ENCODE measurements at regions of chr14 and their contacts with region 1.

Region 1: DNA sequence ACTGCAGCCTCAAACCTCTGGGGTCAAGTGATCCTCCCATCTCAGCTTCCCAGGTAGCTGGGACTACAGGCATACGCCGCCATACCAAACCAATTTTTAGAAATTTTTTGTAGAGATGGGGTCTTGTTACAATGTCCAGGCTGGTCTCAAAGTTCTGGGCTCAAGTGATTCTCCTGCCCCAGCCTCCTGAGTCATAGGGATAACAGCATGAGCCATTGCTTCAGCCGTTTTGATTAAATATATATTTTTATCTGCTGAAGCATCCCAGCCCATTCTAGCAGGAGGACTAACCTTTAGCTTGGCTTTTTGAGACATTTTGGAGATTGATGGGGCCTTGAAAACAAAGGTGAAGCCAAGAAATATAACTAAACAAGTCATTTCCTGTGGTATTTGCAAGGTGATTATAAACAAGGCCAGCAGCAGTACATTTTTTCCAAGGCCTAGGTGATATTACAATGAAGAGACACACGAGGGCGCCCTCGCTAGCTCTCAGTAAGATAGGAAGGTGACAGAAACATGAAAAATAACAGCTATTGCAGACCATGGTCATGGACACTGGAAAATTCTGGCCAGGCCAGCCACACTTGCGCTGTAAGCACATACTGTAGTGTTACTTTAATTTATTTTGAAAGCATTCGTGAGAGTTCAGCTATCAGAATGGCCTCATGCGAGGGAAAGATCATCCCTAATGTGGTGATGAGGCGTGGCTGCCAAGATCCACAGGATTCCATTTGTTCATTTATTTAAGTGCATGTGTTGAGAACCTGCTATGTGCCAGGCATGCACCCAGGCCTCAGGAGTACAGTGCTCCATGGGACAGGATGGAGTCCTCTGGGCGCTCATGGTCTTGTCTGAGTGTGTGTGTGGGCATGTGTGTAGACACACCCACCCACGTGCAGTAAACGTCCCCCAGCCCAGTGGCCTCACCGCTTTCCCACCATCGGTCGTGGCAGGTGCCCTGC is 63.5 kb downstream of the DGLUCY start:
- DNase-seq: peak; percentile 81
- H3K4me3 Mint-ChIP-seq: no peak overlapping the region
- H3K27ac Mint-ChIP-seq: peak overlapping the region; percentile 90
- H3K4me1 Mint-ChIP-seq: peaks cover 20% of the 10 kb centered on the region
- H3K27me3 Mint-ChIP-seq: no peaks in the 10 kb centered on the region

Region 2: DNA sequence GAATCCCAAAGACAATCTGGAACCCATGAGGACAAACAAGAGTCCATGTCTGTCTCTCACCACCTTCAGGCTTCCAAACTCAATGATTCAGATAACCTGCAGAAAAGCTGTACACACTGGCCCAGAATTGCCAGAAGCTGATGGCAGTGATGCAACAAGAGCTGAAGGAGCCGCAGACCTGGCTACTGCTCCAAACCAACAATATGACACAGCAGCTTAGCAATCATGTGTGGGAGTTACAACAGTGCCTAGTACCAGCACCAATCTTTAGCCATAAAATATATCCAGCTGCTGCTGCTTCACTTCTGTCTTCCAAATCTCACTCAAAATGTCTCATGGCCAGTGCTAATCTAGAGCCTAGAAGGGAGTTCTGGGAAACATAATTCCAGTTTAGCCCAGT is 138.9 kb before region 1 on chr14:
- CTCF ChIA-PET with region 1: interaction called, 17 read pairs
- DNase-seq: no peak
- H3K4me3 Mint-ChIP-seq: no peak overlapping the region
- H3K27ac Mint-ChIP-seq: no peak overlapping the region
- H3K4me1 Mint-ChIP-seq: peaks cover 61% of the 10 kb centered on the region
- H3K27me3 Mint-ChIP-seq: no peaks in the 10 kb centered on the region

Region 3: GRCh38 chr14:91163316-91163715 is 14.0 kb before region 1 on chr14:
- CTCF ChIA-PET with region 1: interaction called, 10 read pairs
- DNase-seq: no peak
- H3K4me3 Mint-ChIP-seq: no peak overlapping the region
- H3K27ac Mint-ChIP-seq: no peak overlapping the region
- H3K4me1 Mint-ChIP-seq: no peaks in the 10 kb centered on the region
- H3K27me3 Mint-ChIP-seq: no peaks in the 10 kb centered on the region

Region 4: DNA sequence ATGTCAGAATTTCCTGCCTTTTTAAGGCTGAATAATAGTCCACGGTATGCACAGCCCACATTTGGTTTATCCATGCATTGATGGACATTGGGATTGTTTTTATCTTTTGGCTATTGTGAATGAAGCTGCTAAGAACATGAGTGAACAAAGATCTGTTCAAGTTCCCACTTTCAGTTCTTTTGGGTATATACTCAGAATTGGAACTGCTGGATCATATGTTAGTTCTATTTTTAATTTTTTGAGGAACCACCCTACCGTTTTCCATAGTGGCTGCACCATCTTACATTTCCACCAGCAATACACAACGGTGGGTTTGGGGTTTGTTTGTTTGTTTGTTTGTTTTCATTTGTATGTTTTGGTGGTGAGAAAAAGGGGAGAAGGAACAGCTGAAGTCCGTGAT is 60.7 kb after region 1 on chr14:
- CTCF ChIA-PET with region 1: interaction called, 70 read pairs
- DNase-seq: no peak
- H3K4me3 Mint-ChIP-seq: no peak overlapping the region
- H3K27ac Mint-ChIP-seq: no peak overlapping the region
- H3K4me1 Mint-ChIP-seq: peaks cover 72% of the 10 kb centered on the region
- H3K27me3 Mint-ChIP-seq: no peaks in the 10 kb centered on the region

Region 5: GRCh38 chr14:91258011-91258618 is 80.8 kb after region 1 on chr14:
- CTCF ChIA-PET with region 1: interaction called, 11 read pairs
- DNase-seq: no peak
- H3K4me3 Mint-ChIP-seq: no peak overlapping the region
- H3K27ac Mint-ChIP-seq: no peak overlapping the region
- H3K4me1 Mint-ChIP-seq: peaks cover 85% of the 10 kb centered on the region
- H3K27me3 Mint-ChIP-seq: peaks cover 3% of the 10 kb centered on the region

Measured in activated naive CD4-positive, alpha-beta T cell treated with anti-CD3 and anti-CD28 coated beads, Interleukin-2, amount 10 ng/mL, durations not matched to agents 7 days and 5 days (primary cell).